ENCODE measurements at regions of chr4 and their contacts with region 1.

Region 1: GRCh38 chr4:67909905-67910584 is 26.2 kb upstream of the TMPRSS11D start:
- DNase-seq: no peak
- H3K4me3 Mint-ChIP-seq: no peak overlapping the region
- H3K27ac Mint-ChIP-seq: no peak overlapping the region
- H3K4me1 Mint-ChIP-seq: no peaks in the 10 kb centered on the region
- H3K27me3 Mint-ChIP-seq: peaks cover 12% of the 10 kb centered on the region

Region 2: DNA sequence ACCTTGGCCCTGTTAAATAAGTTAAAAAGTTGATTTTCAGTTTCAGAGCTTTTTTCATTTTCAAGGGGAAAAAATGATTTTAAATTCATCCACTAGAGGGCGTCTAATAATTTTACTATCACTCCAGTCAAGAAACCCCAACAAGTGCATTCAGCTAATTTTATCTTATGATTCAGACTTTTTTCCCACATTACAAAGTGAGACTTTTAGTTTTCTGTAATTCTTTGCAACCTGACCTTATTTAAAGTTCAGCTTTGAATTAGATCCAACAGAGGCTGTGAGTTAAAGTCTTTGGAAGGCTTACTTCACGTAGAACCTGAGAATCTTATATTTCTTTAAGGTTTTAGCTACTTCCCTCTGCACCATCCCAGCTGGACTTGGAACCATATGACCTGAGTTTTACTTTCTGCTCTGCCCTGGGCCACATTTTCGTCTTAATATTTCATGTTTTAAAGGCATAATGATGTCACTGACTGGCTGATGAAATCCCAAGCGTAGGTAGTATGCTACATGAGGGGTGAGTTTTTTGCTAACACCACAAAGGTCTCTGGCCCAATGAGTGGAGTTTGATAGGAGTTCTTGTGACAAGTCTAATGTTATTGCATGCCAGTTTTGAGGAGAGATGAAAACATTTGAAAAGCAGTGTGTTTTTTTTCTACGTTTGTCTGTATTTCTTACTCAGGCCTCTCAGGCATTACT is 163.1 kb before region 1 on chr4:
- intact Hi-C with region 1: loop called (anchors 10 kb)
- DNase-seq: no peak
- H3K4me3 Mint-ChIP-seq: no peak overlapping the region
- H3K27ac Mint-ChIP-seq: no peak overlapping the region
- H3K4me1 Mint-ChIP-seq: peaks cover 13% of the 10 kb centered on the region
- H3K27me3 Mint-ChIP-seq: no peaks in the 10 kb centered on the region

Region 3: DNA sequence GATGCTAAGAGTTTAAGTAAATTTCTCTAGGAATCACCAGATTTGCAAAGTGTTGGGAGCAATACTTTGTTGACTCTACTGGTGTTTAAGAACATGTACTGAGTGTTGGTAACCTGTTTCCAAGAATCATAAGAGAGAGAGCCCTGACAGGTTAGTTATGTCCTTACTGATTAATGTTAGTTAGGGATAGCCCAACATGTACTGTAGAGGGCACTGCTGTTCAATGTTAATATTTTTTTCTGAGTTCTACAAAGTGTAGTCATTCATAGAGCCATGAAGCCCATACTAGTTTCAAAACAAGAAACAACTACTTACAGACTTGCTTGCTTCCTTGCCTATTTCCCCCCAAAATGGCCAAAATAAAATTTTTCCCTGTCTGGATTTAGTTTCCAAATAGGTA is 38.2 kb before region 1 on chr4:
- intact Hi-C with region 1: loop called (anchors 2 kb)
- DNase-seq: no peak
- H3K4me3 Mint-ChIP-seq: no peak overlapping the region
- H3K27ac Mint-ChIP-seq: no peak overlapping the region
- H3K4me1 Mint-ChIP-seq: no peaks in the 10 kb centered on the region
- H3K27me3 Mint-ChIP-seq: peaks cover 3% of the 10 kb centered on the region

Region 4: GRCh38 chr4:67934628-67935027 is 24.6 kb after region 1 on chr4:
- intact Hi-C with region 1: no loop called
- DNase-seq: no peak
- H3K4me3 Mint-ChIP-seq: no peak overlapping the region
- H3K27ac Mint-ChIP-seq: no peak overlapping the region
- H3K4me1 Mint-ChIP-seq: no peaks in the 10 kb centered on the region
- H3K27me3 Mint-ChIP-seq: peaks cover 1% of the 10 kb centered on the region

Measured in activated T-helper 1 cell treated with anti-CD3 and anti-CD28 coated beads, Interleukin-12 subunit alpha, Interleukin-12 subunit beta, Interleukin-2, Interleukin-4 antibody, amounts not matched to agents 30 ng/mL and 10 ng/mL and 1 ng/mL, durations not matched to agents 14 hours and 24 hours and 36 hours (primary cell).